Spleen (tissue), 13 donors: ENCODE measurements at regions of chr1 and their contacts with region 1.

Region 1: DNA sequence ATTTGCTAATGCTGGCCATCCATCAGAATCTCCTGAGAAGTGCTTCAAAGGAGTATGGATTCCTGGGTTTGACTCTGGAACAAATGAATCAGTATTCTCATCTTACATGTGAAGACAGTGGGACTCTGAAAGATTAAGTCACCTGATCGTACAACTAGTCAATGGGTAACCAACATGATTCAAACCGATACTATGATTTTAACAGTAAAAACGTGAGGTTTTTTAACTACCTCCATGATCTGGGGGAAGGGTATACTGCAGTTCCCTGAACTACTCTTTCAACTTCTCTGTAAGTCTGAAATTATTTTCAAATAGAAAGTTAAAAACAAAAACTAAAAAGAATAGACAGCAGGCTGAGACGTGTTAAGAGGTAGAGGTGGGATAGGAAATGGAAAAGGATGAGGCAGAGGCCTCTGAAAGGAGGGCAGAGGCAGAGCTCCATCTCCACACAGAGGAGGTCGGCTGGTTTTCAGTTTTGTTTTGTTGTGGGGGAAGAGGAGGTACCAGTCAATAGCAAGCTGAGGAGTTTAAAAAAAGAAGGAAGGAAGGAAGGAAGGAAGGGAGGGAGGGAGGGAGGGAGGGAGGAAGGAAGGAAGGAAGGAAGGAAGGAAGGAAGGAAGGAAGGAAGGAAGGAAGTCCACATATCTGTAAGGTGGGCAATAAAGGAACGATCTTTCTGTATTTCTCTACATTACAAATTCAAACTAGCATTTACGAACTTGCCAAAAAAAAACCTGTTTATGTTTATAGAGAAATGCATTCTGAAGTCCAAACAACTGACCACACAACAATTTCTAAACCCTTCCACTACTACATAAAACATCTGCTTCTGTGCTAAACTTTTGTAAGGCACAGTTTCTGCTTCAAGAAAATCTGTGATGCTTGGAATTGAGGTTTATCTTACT is 213.1 kb downstream of the RERE start:
- DNase-seq: no peak
- H3K4me3 ChIP-seq: peak overlapping the region in 1 of 8 donors; percentile 13
- H3K27ac ChIP-seq: peak overlapping the region; percentile 53 to 75 (median 68)
- H3K4me1 ChIP-seq: peaks cover 7 to 47% (median 31%) of the 10 kb centered on the region in 6 donors
- H3K27me3 ChIP-seq: no peaks in the 10 kb centered on the region
- CTCF ChIP-seq: no peak
- POLR2A ChIP-seq: no peak

Region 2: DNA sequence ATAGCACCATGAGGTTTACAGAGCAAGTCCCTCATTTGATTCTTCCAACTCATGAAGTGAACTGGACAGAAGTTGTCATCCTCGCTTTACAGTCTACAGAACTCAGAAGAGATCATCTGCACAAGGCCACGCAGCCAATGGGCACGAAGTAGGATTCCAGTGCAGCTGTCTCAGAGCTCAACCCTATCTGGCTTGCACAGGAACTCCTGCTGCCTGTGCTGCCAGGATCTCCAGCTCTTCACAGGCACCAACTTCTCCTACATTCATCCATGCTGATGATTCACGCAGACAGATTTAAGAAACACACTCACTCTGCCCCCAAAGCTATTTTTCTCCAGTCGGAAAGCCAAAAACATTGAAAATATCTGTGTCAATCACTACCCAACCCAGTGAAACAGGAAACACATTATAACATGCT is 56.1 kb after region 1 on chr1:
- intact Hi-C with region 1: loop called (anchors 10 kb)
- DNase-seq: no peak
- H3K4me3 ChIP-seq: peak overlapping the region in 1 of 8 donors; percentile 23
- H3K27ac ChIP-seq: peak overlapping the region; percentile 32 to 82 (median 72)
- H3K4me1 ChIP-seq: peaks cover 47 to 77% (median 70%) of the 10 kb centered on the region in 6 donors
- H3K27me3 ChIP-seq: no peaks in the 10 kb centered on the region
- CTCF ChIP-seq: no peak
- POLR2A ChIP-seq: no peak